PC-3 (cell line): ENCODE measurements at regions of chr4 and their contacts with region 1.

Region 1: DNA sequence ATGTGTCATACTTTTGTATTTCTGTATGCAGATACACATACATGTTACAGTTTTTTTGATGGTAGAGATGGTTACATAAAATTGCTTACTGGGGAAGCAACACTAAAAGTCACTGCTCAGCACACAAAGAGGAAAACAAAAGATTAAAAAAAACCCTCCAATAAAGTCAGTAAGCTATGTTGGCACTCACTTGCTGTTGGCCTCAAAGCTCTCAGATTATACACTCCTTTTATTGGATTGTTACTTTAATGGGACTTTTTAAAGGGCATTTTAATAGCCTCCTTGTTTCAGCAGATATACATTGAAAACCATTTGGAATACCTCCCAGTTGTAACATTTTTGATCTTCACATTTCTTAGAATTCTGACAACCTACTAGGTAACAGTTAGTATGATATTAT is 222.0 kb upstream of the HHIP start:
- DNase-seq: no peak
- ATAC-seq: peak; percentile 55
- H3K4me3 ChIP-seq: no peak overlapping the region
- H3K27ac ChIP-seq: no peak overlapping the region
- H3K4me1 ChIP-seq: no peaks in the 10 kb centered on the region
- H3K27me3 ChIP-seq: no peaks in the 10 kb centered on the region
- CTCF ChIP-seq: no peak

Region 2: DNA sequence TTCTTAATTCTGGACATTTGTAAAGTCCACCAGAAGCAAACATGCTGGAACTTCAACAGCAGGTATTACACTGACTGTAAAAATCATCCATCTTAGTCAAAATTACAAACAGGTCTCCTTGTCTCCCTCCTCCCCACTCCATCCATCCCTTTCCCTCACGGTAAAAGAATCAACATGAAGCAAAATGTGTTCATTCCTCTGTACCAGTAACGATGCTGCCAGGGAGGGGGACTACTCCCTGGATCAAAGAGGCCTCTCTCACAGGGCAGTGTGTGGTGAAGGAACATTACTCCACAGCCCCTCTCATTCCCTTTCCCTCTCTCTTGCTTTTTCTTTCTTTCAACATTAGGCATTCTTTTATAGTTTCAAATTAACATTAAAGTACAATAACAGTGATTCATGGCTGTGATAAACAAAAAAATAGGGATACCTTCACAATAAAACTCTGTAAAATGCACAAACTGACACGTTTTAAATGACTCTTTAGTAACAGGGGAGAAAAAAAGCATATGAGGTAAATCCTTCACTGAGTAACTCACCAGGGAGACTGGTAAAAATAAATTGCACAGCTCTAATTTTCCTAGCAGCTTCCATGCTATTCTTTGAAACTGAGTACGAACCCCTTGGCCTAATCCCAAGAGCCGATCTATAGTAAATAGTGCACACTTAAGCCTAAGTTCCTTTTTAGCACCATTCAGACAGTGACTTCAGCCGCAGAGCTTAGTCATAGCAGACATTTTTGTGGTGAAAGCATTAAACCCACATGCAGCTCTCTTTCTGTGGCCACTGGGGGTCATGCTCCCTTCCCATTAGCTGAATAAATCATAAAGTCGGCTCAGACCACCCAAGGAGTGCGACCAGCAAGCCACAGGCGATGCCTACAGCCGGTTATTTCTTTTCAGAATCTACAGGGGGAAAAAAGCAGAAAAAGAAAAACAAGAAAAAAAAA is 67.8 kb before region 1 on chr4:
- CTCF ChIA-PET with region 1: no interaction called
- POLR2A ChIA-PET with region 1: no interaction called
- intact Hi-C with region 1: loop called (anchors 2 kb)
- DNase-seq: peak; percentile 85
- ATAC-seq: peak; percentile 95
- H3K4me3 ChIP-seq: no peak overlapping the region
- H3K27ac ChIP-seq: no peak overlapping the region
- H3K4me1 ChIP-seq: peaks cover 12% of the 10 kb centered on the region; the same call in 1 of the 2 replicates
- H3K27me3 ChIP-seq: peaks cover 5% of the 10 kb centered on the region; the same call in 1 of the 2 replicates
- CTCF ChIP-seq: peak; percentile 48